T-cell (primary cell): ENCODE measurements at regions of chr2 and their contacts with region 1.

Region 1: GRCh38 chr2:232231514-232231913 is 147.0 kb upstream of the ALPP start:
- DNase-seq: no peak
- ATAC-seq: no peak
- H3K4me3 ChIP-seq: no peak overlapping the region
- H3K4me3 Mint-ChIP-seq: no peak overlapping the region
- H3K27ac ChIP-seq: no peak overlapping the region
- H3K27ac Mint-ChIP-seq: no peak overlapping the region
- H3K4me1 ChIP-seq: peaks cover 0 to 2% of the 10 kb centered on the region in 2 experiments
- H3K4me1 Mint-ChIP-seq: peaks cover 25 to 29% (median 29%) of the 10 kb centered on the region in 3 donors
- H3K27me3 ChIP-seq: no peaks in the 10 kb centered on the region
- H3K27me3 Mint-ChIP-seq: no peaks in the 10 kb centered on the region

Region 2: GRCh38 chr2:232250246-232251175 is 19.0 kb after region 1 on chr2:
- CTCF ChIA-PET with region 1: interaction called in 1 of 2 experiments, 16 read pairs
- POLR2A ChIA-PET with region 1: no interaction called
- DNase-seq: no peak
- ATAC-seq: no peak
- H3K4me3 ChIP-seq: no peak overlapping the region
- H3K4me3 Mint-ChIP-seq: no peak overlapping the region
- H3K27ac ChIP-seq: no peak overlapping the region
- H3K27ac Mint-ChIP-seq: no peak overlapping the region
- H3K4me1 ChIP-seq: no peaks in the 10 kb centered on the region
- H3K4me1 Mint-ChIP-seq: no peaks in the 10 kb centered on the region
- H3K27me3 ChIP-seq: no peaks in the 10 kb centered on the region
- H3K27me3 Mint-ChIP-seq: no peaks in the 10 kb centered on the region